Heart right ventricle (tissue), 16 donors: ENCODE measurements at regions of chr2 and their contacts with region 1.

Region 1: GRCh38 chr2:231297108-231297908 is 98.2 kb upstream of the B3GNT7 start:
- DNase-seq: peak; percentile 49 to 60
- ATAC-seq: peak; percentile 67 to 84 (median 74)
- H3K4me3 ChIP-seq: no peak overlapping the region
- H3K27ac ChIP-seq: peak overlapping the region in 4 of 10 donors; percentile 19 to 43 (median 30)
- H3K4me1 ChIP-seq: peaks cover 0 to 44% (median 11%) of the 10 kb centered on the region in 9 donors
- H3K27me3 ChIP-seq: no peaks in the 10 kb centered on the region
- CTCF ChIP-seq: peak; percentile 45 to 80 (median 71)

Region 2: DNA sequence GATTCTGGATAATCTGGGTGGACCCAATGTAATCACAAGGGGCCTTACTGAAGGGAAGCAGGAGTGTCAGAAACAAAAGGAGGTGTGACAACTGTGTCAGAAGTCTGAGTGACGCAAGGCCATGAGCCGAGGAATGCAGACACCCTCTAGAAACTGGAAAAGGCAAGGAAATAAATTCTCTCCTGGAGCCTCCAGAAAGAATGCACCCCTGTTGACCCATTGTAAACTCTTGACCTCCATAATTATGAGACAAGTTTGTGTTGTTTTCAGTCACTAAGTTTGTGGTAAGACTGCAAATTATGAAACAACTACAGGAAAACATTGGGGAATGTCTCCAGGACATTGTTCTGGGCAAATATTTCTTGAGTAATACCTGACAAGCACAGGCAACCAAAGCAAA is 50.9 kb after region 1 on chr2:
- intact Hi-C with region 1: loop called in 1 of 10 experiments (anchors 2 kb)
- DNase-seq: no peak
- ATAC-seq: no peak
- H3K4me3 ChIP-seq: no peak overlapping the region
- H3K27ac ChIP-seq: no peak overlapping the region
- H3K4me1 ChIP-seq: peaks cover 0 to 23% (median 0%) of the 10 kb centered on the region in 9 donors
- H3K27me3 ChIP-seq: no peaks in the 10 kb centered on the region
- CTCF ChIP-seq: no peak

Region 3: GRCh38 chr2:231394211-231395141 is 97.2 kb after region 1 on chr2:
- intact Hi-C with region 1: loop called in 4 of 10 experiments (anchors 2 to 5 kb)
- DNase-seq: no peak
- ATAC-seq: no peak
- H3K4me3 ChIP-seq: peak overlapping the region in 1 of 10 donors; percentile 42
- H3K27ac ChIP-seq: peak overlapping the region in 1 of 10 donors; percentile 70
- H3K4me1 ChIP-seq: peaks cover 0 to 35% (median 8%) of the 10 kb centered on the region in 9 donors
- H3K27me3 ChIP-seq: peaks cover 0 to 31% (median 20%) of the 10 kb centered on the region in 7 donors
- CTCF ChIP-seq: peak in 6 of 9 donors; percentile 9 to 20 (median 15)

Region 4: DNA sequence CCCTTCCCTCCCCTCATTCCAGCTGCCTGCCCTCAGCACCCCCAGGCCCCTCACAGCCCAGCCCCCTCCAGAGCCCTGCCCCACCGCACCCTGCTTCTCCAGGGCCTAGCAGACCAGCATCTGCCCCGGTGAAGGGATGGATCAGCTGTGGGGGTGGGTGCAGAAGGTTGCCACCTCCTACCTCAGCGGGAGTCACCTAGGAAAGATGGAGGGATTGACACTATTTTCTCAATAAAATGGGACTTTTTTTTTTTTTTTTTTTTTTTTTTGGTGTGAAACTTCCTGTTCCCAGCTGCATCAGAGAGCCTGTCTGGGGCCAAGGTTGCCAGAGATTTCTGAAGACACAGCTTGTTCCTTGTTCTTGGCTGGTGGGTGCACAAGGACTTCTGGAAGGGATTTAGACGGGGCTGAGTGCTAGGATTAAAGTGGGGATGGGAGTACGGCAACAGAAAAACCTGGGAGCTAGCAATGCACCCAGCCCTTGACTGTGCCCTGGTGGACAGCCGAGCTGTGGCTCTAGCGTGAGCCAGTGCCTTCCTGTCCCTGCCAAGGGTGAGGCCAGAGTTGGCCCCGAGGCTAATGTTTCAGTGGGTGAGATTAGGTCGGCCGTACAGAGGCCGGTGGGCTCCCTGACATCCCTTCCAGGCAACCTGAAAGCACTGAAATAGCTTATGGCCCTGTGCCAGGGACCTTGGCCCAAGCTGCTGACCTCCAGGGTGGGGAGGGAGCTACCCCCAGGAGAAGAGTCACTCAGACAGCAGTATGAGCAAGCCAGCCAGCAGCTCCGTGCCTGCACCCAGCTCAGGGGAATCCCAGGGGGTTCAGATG is 102.8 kb after region 1 on chr2:
- intact Hi-C with region 1: loop called in 8 of 10 experiments (anchors 2 to 10 kb)
- DNase-seq: peak; percentile 53 to 60
- ATAC-seq: peak; percentile 77 to 94 (median 88)
- H3K4me3 ChIP-seq: peak overlapping the region in 1 of 10 donors; percentile 5
- H3K27ac ChIP-seq: peak overlapping the region in 9 of 10 donors; percentile 28 to 76 (median 59)
- H3K4me1 ChIP-seq: peaks cover 0 to 31% (median 22%) of the 10 kb centered on the region in 9 donors
- H3K27me3 ChIP-seq: peaks cover 0 to 16% (median 10%) of the 10 kb centered on the region in 7 donors
- CTCF ChIP-seq: peak in 4 of 9 donors; percentile 34 to 47 (median 41)

Region 5: GRCh38 chr2:231411831-231412617 is 114.7 kb after region 1 on chr2:
- intact Hi-C with region 1: loop called in 5 of 10 experiments (anchors 5 to 10 kb)
- DNase-seq: peak; percentile 76 to 85
- ATAC-seq: peak; percentile 96 to 100 (median 98)
- H3K4me3 ChIP-seq: peak overlapping the region; percentile 46 to 76 (median 61)
- H3K27ac ChIP-seq: peak overlapping the region in 3 of 10 donors; percentile 35 to 53 (median 40)
- H3K4me1 ChIP-seq: peaks cover 0 to 14% (median 12%) of the 10 kb centered on the region in 9 donors
- H3K27me3 ChIP-seq: peaks cover 0 to 43% (median 17%) of the 10 kb centered on the region in 7 donors
- CTCF ChIP-seq: peak; percentile 65 to 94 (median 90)